ENCODE measurements at regions of chr2 and their contacts with region 1.

Region 1: GRCh38 chr2:133765658-133766057 is 197.4 kb upstream of the NCKAP5 start:
- DNase-seq: peak in 2 of 3 donors; percentile 15 to 57
- ATAC-seq: peak; percentile 93 to 95
- H3K4me3 ChIP-seq: no peak overlapping the region
- H3K27ac ChIP-seq: peak overlapping the region; percentile 88
- H3K4me1 ChIP-seq: peaks cover 9% of the 10 kb centered on the region
- H3K27me3 ChIP-seq: no peaks in the 10 kb centered on the region

Region 2: DNA sequence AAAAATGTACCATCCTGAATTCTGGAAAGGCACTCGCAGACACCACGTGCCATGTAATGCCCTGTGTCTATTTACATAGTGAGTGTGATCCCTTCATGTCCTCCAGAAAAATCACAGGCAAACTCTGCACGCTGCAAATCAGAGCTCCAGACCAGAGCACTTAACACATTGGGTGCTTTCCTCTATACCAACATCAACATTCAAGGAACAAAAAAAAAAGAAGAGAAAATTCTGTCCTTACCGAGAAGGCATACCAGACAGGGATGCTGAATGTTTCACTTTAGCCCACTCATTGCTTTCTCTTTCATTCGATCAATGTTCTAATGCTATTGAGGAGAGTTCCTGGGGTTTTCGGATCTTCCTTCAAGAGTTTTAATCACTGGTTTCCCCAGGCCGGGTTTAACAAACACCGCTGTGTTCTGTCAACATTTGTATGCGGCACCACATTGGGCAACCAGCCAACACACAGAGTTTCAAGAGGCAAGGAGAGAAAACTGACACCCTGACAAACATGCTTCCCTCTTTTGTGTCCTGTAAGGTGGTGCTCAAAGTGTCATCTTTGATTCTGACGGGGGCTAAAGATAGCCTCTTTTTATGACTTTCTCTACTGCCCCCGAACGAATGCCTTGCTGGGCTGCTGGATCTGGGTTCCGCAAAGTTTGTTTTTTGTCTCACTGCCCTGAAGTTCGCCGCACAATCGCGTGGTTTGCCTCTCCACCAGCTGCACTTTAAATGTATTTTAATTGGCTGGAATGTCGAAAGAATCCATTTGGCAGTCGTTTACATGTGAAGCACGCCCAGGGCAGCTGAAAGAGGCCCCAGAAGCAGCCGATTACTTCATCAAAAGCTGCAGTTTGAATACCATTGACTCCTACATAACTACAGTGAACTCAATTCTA is 91.0 kb before region 1 on chr2:
- intact Hi-C with region 1: loop called in 2 of 4 experiments (anchors 5 to 10 kb)
- DNase-seq: peak; percentile 64 to 83 (median 73)
- ATAC-seq: peak; percentile 63 to 67
- H3K4me3 ChIP-seq: peak overlapping the region; percentile 42
- H3K27ac ChIP-seq: peak overlapping the region; percentile 78
- H3K4me1 ChIP-seq: no peaks in the 10 kb centered on the region
- H3K27me3 ChIP-seq: no peaks in the 10 kb centered on the region